A673 (cell line): ENCODE measurements at regions of chr11 and their contacts with region 1.

Region 1: DNA sequence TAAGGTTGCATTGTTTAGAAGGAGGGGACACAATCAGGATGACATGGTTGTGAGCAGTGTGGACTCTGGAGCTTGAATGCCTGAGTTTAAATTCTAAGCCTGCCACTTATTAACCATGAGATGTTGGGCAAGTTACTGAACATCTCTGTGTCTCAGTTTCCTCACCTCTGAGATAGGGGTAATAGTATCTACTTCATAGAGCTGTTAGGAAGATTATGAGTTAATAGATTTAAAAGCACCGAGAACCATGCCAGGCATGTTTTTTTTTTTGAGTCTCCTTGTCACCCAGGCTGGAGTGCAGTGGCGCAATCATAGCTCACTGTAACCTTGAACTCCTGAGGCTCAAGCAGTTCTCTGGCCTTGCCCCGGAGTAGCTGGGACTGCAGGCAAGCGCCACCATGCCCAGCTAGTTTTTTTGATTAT is 33.3 kb downstream of the ST14 start:
- DNase-seq: no peak
- H3K4me3 ChIP-seq: no peak overlapping the region
- H3K27ac ChIP-seq: no peak overlapping the region
- H3K4me1 ChIP-seq: peaks cover 16% of the 10 kb centered on the region
- H3K27me3 ChIP-seq: no peaks in the 10 kb centered on the region
- CTCF ChIP-seq: no peak

Region 2: GRCh38 chr11:130118636-130119387 is 74.0 kb before region 1 on chr11:
- CTCF ChIA-PET with region 1: no interaction called
- POLR2A ChIA-PET with region 1: no interaction called
- intact Hi-C with region 1: loop called (anchors 2 kb)
- DNase-seq: no peak
- H3K4me3 ChIP-seq: no peak overlapping the region
- H3K27ac ChIP-seq: no peak overlapping the region
- H3K4me1 ChIP-seq: peaks cover 6% of the 10 kb centered on the region
- H3K27me3 ChIP-seq: no peaks in the 10 kb centered on the region
- CTCF ChIP-seq: no peak

Region 3: DNA sequence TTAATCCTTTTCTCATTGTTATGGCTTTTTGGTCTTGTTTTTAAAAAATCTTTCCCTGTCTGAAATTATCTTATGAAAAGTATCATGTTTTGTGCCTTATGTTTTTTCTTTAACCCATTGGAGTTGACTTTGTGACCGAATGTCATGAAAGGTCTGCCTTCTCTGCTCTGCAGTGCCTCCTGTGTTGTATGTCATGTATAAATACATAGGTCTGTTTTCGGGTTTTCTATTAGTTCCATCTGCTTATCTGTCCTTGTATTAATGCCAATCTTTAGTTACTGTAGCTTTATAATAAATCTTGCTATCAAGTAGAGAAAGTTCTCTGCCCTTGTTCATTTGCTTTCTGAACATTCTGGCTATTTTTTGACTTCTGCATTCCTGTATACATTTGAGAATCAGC is 48.9 kb after region 1 on chr11:
- CTCF ChIA-PET with region 1: no interaction called
- POLR2A ChIA-PET with region 1: no interaction called
- intact Hi-C with region 1: no loop called
- DNase-seq: no peak
- H3K4me3 ChIP-seq: no peak overlapping the region
- H3K27ac ChIP-seq: no peak overlapping the region
- H3K4me1 ChIP-seq: no peaks in the 10 kb centered on the region
- H3K27me3 ChIP-seq: no peaks in the 10 kb centered on the region
- CTCF ChIP-seq: no peak